ENCODE measurements at regions of chr19 and their contacts with region 1.

Region 1: DNA sequence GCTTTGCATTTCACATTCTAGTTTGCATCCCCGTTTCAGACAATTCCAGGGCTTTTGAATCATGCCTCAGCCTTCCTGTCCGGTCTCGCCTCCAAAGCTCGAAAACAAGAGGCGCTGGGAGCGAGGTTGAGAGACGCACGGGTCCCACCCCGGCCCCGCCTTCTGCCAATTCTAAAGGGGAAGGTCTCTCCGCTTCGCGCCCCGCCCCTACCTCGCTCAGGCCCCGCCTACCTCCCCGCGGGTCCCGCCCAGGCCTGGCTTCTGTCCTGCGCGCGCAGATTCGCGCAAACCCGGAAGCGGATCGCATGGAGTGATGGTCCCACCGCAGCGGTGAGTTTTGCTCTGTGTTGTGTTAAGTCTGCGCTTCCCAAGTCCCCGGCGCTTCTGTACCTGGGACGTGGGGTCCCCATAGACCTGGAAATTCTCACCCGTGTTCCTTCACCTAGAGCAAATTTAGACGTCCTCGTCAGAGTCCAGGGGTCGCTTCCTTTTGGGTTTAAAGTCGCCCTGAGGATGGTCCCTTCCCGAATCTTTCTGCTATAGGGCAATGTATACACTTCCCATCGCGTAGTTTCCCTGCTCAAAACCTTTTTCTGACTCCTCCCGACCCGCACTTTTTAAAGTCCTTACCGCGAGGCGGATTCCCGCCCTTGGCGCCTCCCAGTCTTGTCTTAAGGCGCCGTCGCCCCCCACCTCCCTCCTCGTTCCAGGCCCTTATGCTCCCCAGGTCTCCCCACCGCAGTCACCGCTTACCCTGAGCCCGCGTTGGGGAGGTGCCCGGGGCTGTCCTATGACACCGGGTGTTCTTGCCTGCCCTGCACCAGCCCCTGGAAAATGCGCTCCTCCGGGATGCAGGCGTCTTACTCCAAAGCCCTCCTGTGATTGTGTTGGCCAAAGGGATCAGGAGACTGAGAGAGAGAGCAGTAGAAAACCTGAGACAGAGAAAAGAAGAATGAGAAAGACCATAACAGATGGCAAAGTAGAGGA is at the start of gene ZNF845:
- DNase-seq: peak; percentile 92 to 96
- ATAC-seq: peak; percentile 99 to 100 (median 100)
- H3K4me3 ChIP-seq: peak within 1 kb of the TSS; percentile 58 to 90 (median 72)
- H3K27ac ChIP-seq: peak within 1 kb of the TSS; percentile 43 to 83 (median 76)
- H3K4me1 ChIP-seq: peaks cover 2 to 15% (median 8%) of the 10 kb centered on the region in 9 donors
- H3K27me3 ChIP-seq: peaks cover 0 to 5% (median 0%) of the 10 kb centered on the region in 7 donors
- CTCF ChIP-seq: no peak
- total RNA-seq, gene ZNF845: 2.7 to 4.9 (median 3.8) TPM

Region 2: DNA sequence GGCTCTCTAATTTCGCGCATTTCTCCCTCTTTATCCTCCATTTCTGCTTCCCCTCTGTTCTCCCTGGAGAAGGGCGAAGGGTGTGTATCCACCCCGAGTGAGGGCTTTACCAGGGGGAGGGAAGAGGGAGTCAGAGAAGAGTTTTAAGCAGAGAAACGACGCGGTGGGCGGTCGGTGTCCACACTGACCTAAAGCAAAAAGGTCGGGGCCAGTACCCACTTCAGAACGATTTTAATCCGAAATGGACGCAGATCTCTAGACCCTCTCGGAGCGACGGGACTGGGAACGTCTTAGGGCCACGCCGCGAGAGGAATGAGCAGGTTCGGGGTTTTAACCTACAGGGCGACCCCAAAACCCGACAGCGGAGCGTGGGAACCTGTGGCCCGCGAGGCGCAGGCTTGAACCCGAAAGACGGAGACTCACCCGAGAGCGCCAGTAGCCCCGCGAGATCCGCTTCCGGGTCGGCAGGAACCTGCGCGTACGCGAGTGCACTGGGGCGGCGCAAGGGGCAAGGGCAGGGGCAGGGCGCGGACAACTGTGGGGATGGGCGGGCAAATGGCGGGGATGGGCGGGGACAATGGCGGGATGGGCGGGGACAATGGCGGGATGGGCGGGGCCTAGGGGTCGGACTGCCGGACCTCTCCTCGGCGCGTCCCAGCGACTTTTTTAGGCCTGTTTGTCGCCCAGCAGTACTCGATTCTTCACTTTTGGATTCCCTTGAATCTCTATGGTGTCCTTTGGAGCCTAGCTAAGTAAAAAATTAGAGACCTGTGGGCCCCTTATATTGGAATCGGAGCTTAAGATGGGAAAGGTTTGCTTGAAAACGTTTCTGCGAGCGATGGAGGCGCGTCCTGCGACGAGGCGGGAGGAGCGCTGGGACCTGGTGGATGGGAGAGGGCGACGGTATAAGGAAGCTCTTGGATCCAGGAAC is 79.1 kb before region 1 on chr19 and contains the start of gene ZNF677:
- intact Hi-C with region 1: loop called in 2 of 10 experiments (anchors 5 to 10 kb)
- DNase-seq: peak; percentile 94 to 95
- ATAC-seq: peak; percentile 100
- H3K4me3 ChIP-seq: peak within 1 kb of the TSS; percentile 67 to 95 (median 87)
- H3K27ac ChIP-seq: peak within 1 kb of the TSS; percentile 55 to 92 (median 85)
- H3K4me1 ChIP-seq: peaks cover 0 to 20% (median 14%) of the 10 kb centered on the region in 9 donors
- H3K27me3 ChIP-seq: no peaks in the 10 kb centered on the region
- CTCF ChIP-seq: no peak
- total RNA-seq, gene ZNF677: 16.9 to 28.0 (median 22.5) TPM

Region 3: DNA sequence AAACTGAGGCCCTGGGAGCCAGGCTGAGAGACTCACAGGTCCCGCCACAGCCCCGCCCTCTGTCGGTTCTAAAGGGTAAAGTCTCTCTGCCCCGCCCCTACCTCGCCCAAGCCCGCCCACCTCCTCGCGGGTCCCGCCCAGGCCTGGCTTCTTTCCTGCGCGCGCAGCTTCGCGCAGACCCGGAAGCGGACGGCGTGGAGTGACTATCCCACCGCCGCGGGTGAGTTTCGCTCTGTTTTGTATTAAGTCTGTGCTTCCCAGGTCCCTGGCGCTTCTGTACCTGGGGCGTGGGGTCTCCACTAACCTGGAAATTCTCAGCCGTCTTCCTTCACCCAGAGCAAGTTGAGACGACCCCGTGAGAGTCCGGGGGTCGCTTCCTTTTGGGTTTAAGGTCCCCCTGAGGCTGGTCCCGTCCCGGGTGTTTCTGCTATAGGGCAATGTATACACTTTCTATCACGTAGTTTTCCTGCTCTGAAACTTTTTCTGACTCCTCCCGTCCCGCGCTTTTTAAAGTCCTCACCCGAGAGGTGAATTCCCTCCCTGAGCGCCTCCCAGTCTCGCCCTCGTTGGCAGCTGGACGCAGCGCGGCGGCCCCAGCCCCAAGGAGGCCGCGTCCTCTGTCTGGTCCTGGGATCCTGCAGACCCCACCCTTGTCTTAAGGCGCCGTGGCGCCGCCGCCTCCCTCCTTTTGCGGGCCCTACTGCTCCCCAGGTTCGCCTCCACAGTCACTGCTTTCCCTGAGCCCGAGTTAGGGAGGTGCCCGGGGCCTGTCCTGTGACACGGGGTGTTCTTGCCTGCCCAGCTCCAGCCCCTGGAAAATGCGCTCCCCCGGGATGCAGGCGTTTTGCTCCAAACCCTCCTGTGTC is 61.5 kb after region 1 on chr19 and contains the start of gene ZNF765:
- intact Hi-C with region 1: loop called in 1 of 10 experiments (anchors 2 kb)
- DNase-seq: peak; percentile 94 to 95
- ATAC-seq: peak; percentile 99 to 100 (median 100)
- H3K4me3 ChIP-seq: peak within 1 kb of the TSS; percentile 65 to 94 (median 79)
- H3K27ac ChIP-seq: peak within 1 kb of the TSS; percentile 11 to 88 (median 76)
- H3K4me1 ChIP-seq: peaks cover 0 to 25% (median 22%) of the 10 kb centered on the region in 9 donors
- H3K27me3 ChIP-seq: peaks cover 0 to under 1% (median 0%) of the 10 kb centered on the region in 7 donors
- CTCF ChIP-seq: peak; percentile 56 to 77 (median 63)
- total RNA-seq, gene ZNF765: 2.6 to 5.4 (median 4.1) TPM

Region 4: DNA sequence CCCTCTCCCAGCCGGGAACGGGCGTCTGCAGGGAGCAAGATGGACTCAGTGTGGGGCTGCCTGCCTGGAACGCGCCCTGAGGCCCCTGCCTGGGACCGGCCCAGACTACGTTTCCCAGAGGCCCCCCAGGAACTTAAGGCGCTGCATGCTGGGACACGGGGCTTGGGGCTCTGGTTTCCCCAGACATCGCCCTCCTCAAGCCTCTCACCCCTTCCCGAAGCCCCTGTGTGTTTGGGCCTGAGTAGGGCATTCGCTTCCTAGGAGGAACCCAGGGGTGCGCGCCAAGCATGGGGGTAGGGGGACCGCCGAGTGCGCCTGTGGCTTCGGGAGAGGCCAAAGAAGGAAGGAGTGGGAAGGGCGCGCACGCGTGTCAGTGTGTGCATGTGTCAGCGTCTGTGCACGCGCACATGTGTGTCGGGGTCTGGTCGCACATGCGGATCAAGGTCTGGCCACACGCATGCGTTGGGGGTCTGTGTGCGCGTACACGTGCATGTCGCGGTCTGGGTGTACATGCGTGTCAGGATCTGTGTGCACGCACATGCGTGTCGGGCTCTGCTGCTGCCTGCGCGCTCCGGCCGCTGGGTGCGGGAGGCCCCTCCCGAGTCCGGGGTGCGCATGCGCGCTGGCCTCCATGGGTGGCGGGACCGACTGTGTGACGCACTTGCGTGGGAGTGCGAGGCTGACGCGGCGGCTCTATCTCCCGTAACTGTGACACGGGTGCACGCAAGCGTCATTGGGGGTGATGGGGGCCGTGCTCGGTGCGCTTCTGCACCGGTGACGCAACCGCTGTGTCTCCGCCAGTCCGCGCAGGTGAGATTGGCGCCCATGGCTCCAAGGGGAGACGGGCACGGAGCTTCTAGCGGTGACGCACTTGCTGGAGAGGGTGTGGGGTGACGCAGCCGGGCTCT is 220.4 kb after region 1 on chr19:
- intact Hi-C with region 1: no loop called
- DNase-seq: peak; percentile 89 to 90
- ATAC-seq: peak; percentile 86 to 94 (median 93)
- H3K4me3 ChIP-seq: peak overlapping the region; percentile 42 to 75 (median 62)
- H3K27ac ChIP-seq: peak overlapping the region; percentile 10 to 92 (median 85)
- H3K4me1 ChIP-seq: peaks cover 0 to 21% (median 5%) of the 10 kb centered on the region in 9 donors
- H3K27me3 ChIP-seq: no peaks in the 10 kb centered on the region
- CTCF ChIP-seq: no peak

Measured in heart right ventricle (tissue), 16 donors.